ENCODE measurements at regions of chr1 and their contacts with region 1.

Region 1: DNA sequence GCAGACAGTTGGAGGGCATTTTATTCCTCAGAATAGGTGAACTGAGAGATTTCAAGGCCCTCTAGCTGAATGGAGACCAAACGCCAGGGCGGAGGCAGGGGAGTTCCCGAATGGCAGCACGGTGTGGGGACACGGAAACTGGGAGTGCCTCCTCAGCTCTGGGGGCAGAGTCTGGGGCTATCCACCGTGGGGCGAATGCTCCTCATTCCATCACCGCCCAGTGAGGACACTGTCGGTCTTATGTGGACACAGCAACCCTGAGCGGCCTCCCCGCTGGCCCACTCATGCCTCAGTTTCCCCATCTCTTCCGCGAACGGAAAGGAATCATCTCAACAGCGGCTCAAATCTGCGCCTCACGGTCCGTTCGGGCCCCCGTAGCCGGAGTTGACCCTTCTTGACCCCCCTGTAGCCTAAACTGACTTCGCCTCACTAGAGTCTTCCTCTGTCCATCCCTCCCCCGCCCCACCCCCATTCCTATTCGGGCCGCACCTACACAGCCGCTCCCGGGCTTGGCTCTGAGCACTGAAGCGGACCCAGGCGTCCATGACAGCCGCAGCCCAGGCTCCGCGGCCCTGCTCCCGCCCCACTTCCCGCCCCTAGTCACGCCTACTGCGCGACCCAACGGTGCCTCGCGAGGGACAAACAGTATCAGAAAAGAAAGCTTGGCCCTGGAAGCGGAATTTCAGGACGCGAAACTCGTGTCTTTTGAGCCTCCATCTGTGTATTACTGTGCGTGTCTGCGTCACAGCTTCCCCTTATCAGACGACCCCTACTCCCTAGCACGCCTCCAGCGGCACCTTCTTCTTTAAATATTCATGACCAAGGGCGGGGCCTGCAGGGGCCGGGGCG is at the start of gene PEX11B:
- DNase-seq: peak; percentile 90 to 96 (median 92)
- H3K4me3 ChIP-seq: peak within 1 kb of the TSS; percentile 90 to 96
- H3K4me3 Mint-ChIP-seq: peak within 1 kb of the TSS; percentile 89 to 96 (median 92)
- H3K27ac ChIP-seq: peak within 1 kb of the TSS; percentile 79
- H3K27ac Mint-ChIP-seq: peak within 1 kb of the TSS; percentile 91 to 97 (median 95)
- H3K4me1 ChIP-seq: peaks cover 28% of the 10 kb centered on the region
- H3K4me1 Mint-ChIP-seq: peaks cover 24 to 45% (median 35%) of the 10 kb centered on the region in 4 donors
- H3K27me3 ChIP-seq: no peaks in the 10 kb centered on the region
- H3K27me3 Mint-ChIP-seq: no peaks in the 10 kb centered on the region
- total RNA-seq, gene PEX11B: 34.7 to 38.7 TPM

Region 2: DNA sequence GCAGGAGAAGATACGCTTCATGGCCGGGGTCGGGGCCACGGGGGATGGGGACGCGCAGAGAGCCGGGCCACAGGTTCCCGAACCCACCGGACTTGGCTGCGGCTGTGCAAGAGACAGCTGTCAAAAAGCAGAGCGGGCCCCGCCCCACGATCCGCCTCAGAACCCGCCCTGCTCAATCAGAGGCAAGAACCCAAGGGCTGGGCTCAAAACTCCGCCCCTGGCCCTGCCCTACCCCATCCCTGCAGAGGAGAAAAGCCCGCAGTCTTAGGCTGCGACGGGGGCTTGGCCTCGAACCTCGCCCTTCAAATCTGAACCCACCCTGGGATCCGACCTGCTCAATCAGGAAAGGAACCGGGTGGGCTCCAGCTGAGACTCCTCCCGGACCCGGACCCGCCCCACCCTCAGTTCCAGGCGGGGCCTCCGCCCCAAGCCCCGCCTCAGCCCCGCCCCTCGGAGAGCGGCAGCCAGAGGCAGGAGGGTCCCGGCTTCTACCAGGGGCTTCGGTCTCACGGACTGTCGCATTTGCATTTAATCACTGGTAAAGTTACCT is 32.6 kb before region 1 on chr1 and contains the start of gene ANKRD35:
- CTCF ChIA-PET with region 1: interaction called, 3 read pairs
- POLR2A ChIA-PET with region 1: interaction called, 13 read pairs
- intact Hi-C with region 1: no loop called
- DNase-seq: peak; percentile 83 to 91 (median 85)
- H3K4me3 ChIP-seq: peak within 1 kb of the TSS; percentile 6 to 74
- H3K4me3 Mint-ChIP-seq: peak within 1 kb of the TSS; percentile 74 to 88 (median 84)
- H3K27ac ChIP-seq: no peak within 1 kb of the TSS
- H3K27ac Mint-ChIP-seq: peak within 1 kb of the TSS in 6 of 7 donors; percentile 3 to 91 (median 62)
- H3K4me1 ChIP-seq: peaks cover 13% of the 10 kb centered on the region
- H3K4me1 Mint-ChIP-seq: peaks cover 10 to 28% (median 14%) of the 10 kb centered on the region in 4 donors
- H3K27me3 ChIP-seq: peaks cover 11% of the 10 kb centered on the region
- H3K27me3 Mint-ChIP-seq: peaks cover 10 to 21% of the 10 kb centered on the region in 2 donors
- total RNA-seq, gene ANKRD35: not detected

Region 3: GRCh38 chr1:145957443-145958319 is 39.3 kb after region 1 on chr1 and contains the start of gene LIX1L:
- CTCF ChIA-PET with region 1: interaction called, 6 read pairs
- POLR2A ChIA-PET with region 1: interaction called, 61 read pairs
- intact Hi-C with region 1: loop called (anchors 5 kb)
- DNase-seq: peak; percentile 92 to 98 (median 94)
- H3K4me3 ChIP-seq: peak within 1 kb of the TSS; percentile 31 to 63
- H3K4me3 Mint-ChIP-seq: peak within 1 kb of the TSS; percentile 89 to 99 (median 96)
- H3K27ac ChIP-seq: peak within 1 kb of the TSS; percentile 81
- H3K27ac Mint-ChIP-seq: peak within 1 kb of the TSS; percentile 89 to 99 (median 97)
- H3K4me1 ChIP-seq: peaks cover 65% of the 10 kb centered on the region
- H3K4me1 Mint-ChIP-seq: peaks cover 55 to 88% (median 65%) of the 10 kb centered on the region in 4 donors
- H3K27me3 ChIP-seq: no peaks in the 10 kb centered on the region
- H3K27me3 Mint-ChIP-seq: no peaks in the 10 kb centered on the region
- total RNA-seq, gene LIX1L: 64.5 to 66.1 TPM